Right ventricle myocardium inferior (tissue), 1 donor: ENCODE measurements at regions of chr2 and their contacts with region 1.

Region 1: GRCh38 chr2:75640621-75641121 is 5.9 kb upstream of the MRPL19 start:
- DNase-seq: peak; percentile 71
- ATAC-seq: peak; percentile 97

Region 2: DNA sequence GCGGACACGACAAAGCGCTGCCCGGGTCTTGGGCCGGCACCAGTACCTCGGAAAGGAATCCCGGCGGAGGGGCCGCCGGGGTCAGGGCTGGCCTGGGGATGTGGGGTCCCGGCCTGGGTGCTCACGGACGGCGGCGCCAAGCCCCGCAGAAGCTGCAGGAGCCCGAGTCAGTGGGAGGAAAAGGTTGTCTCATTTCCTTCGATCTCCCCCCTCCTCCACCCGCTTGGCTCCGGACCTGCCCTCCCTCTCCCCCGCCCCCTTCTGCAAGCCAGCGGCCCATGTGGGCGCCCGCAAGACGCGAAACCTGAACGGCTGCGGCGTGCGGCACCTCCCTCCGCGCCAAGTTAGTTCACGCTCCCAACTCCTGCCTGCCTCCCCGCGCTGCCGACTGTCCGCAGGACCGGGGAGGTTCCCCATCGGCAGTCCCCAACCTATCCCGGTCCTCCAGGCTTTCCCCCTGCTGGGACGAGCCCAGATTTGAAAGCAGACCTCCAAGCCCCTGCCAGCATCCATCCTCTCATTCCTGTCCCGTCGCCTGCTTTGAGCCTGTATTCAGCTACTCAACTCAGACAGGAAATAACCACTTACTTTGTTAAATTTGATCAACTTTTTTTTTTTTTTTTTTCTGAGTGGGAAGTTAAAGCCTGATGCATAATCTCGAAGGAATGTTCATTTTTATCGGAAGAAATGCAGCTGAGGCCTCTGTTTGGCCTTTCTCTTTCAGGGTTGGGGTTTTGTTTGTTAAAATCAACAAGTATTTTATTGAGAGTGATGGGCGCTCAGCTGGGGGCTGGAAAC is 79.7 kb before region 1 on chr2 and contains the start of gene EVA1A:
- intact Hi-C with region 1: no loop called
- DNase-seq: no peak
- ATAC-seq: peak; percentile 38
- total RNA-seq, gene EVA1A: 0.84 TPM

Region 3: DNA sequence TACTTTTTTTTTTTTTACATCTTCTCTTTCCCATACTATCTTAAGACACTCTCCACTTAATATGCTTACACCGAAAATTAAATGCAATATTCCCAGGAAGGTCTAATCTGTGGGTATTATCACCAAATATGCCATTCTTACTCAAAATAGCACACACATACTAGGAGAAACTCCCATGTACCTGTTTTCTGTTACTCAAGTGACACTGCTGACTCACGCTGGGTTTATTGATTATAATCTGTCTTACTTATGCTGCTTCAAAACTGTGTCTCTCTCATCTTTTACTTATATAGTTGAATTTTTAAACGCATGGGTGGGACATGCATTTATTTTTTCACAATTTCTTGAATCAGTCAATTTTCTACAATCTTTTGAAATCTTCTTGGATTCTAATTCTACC is 35.8 kb after region 1 on chr2:
- intact Hi-C with region 1: loop called (anchors 2 kb)
- DNase-seq: no peak
- ATAC-seq: no peak

Region 4: GRCh38 chr2:75688196-75688595 is 47.5 kb after region 1 on chr2:
- intact Hi-C with region 1: no loop called
- DNase-seq: no peak
- ATAC-seq: no peak